BJ (cell line): ENCODE measurements at regions of chr16 and their contacts with region 1.

Region 1: GRCh38 chr16:88194397-88195268 is 188.1 kb upstream of the ZNF469 start:
- DNase-seq: no peak
- H3K4me3 ChIP-seq: no peak overlapping the region
- H3K27me3 ChIP-seq: no peaks in the 10 kb centered on the region
- CTCF ChIP-seq: no peak

Region 2: GRCh38 chr16:87895641-87896141 is 298.9 kb before region 1 on chr16:
- CTCF ChIA-PET with region 1: no interaction called
- POLR2A ChIA-PET with region 1: no interaction called
- DNase-seq: peak; percentile 25
- H3K4me3 ChIP-seq: no peak overlapping the region
- H3K27me3 ChIP-seq: no peaks in the 10 kb centered on the region
- CTCF ChIP-seq: no peak

Region 3: DNA sequence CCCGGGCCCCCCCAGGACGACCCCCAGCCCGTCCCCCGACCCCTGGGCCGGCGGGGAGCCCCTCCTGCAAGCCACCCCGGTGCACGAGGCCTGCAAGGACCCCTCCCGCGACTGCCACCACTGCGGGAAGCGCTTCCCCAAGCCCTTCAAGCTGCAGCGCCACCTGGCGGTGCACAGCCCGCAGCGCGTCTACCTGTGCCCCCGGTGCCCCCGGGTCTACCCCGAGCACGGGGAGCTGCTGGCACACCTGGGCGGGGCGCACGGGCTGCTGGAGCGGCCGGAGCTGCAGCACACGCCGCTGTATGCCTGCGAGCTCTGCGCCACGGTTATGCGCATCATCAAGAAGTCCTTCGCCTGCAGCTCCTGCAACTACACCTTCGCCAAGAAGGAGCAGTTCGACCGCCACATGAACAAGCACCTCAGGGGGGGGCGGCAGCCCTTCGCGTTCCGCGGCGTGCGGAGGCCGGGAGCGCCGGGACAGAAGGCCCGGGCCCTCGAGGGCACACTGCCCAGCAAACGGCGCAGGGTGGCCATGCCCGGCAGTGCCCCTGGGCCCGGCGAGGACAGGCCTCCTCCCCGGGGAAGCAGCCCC is 242.8 kb after region 1 on chr16:
- CTCF ChIA-PET with region 1: interaction called, 10 read pairs
- POLR2A ChIA-PET with region 1: no interaction called
- DNase-seq: no peak
- H3K4me3 ChIP-seq: no peak overlapping the region
- H3K27me3 ChIP-seq: no peaks in the 10 kb centered on the region
- CTCF ChIP-seq: peak; percentile 73